ENCODE measurements at regions of chr20 and their contacts with region 1.

Region 1: DNA sequence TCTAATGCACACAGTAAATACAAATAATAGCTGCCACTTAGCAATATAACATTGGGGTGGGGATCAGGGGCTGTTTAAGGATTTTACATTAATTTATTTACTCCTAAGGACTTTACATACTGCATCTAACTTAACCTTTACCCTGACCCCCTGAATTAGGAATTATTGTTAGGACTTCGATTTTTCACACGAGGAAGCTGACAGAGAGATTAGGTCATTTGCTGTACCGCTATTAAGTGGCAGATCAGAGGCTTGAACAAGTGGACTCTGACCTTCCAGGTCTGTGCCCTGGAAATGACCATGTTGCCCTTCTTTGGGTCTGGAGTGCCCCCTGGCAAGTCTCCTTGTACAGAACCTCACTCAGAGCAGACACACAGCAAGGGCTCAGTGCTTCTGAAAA is 5.2 kb upstream of the ELMO2 start:
- DNase-seq: no peak
- H3K4me3 Mint-ChIP-seq: no peak overlapping the region
- H3K27ac Mint-ChIP-seq: no peak overlapping the region
- H3K4me1 Mint-ChIP-seq: peaks cover 37% of the 10 kb centered on the region
- H3K27me3 Mint-ChIP-seq: peaks cover 33% of the 10 kb centered on the region

Region 2: DNA sequence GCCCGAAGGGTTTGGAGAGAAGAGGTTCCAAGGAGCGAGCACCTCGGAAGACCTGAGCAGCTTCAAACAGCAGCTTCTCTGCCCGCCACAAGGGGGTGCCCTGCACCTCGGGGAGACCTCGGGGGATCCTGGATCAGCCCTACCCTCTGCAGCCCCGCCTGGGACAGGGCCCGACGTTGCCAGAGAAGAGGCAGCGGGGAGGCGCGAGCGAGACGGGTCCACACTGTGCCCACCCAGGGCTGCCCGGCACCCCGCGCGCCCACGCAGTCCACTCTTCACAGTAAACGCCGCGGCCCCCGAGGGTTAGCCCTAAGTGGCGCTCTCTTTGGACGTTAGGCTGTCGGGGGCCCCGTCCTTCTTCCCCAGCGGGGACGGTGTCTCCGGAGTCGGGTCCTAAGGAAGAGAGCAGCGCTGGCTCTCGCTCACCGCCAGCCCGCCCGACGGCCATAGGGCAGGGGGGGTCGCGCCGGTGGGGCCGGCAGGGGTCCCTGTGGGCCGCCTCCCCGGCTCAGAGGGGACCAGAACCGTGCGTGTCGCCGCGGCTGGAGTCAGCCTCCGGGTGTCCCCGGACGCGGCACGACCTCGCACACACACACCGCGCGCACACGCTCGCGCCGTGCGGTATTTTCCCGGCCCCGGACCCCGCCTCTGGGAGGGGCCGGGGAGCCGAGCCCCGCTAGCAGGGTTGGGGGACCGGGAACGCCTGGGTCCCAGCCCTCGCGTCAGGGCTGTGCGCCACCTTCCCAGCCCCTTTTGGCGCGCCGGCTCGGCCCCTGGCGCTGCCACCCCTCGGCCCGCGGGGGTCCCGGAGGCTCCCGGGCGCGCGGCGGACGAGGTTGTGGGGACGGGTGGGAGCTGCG is 104.3 kb before region 1 on chr20:
- CTCF ChIA-PET with region 1: interaction called, 30 read pairs
- DNase-seq: peak; percentile 83
- H3K4me3 Mint-ChIP-seq: peak overlapping the region; percentile 19
- H3K27ac Mint-ChIP-seq: no peak overlapping the region
- H3K4me1 Mint-ChIP-seq: peaks cover 6% of the 10 kb centered on the region
- H3K27me3 Mint-ChIP-seq: peaks cover 93% of the 10 kb centered on the region

Region 3: DNA sequence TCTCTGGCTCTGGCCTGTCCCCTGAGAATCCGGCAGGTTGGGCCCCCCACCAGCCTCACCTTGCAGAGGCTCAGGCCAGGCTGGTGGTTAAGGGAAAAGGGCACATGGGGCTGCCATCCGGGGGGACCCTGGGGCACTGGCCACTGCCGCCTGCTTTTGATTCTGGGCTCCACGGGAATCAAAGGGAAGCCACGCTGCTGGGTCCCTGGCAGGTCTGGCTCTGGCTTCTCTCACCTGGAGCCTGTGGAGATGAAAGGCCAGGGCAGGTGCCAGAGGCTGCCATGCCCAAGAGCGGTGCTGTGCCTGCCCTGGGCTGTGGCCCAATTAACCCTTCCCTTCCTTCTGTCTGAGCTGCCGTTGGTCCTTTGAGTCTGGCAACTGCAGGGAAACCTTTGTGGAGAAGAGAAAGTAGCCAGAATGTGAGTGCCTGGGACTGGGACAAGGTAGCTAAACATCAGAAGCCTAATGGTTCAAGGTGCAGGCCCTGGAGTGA is 93.9 kb before region 1 on chr20:
- CTCF ChIA-PET with region 1: no interaction called
- DNase-seq: no peak
- H3K4me3 Mint-ChIP-seq: no peak overlapping the region
- H3K27ac Mint-ChIP-seq: no peak overlapping the region
- H3K4me1 Mint-ChIP-seq: no peaks in the 10 kb centered on the region
- H3K27me3 Mint-ChIP-seq: peaks cover 90% of the 10 kb centered on the region

Region 4: DNA sequence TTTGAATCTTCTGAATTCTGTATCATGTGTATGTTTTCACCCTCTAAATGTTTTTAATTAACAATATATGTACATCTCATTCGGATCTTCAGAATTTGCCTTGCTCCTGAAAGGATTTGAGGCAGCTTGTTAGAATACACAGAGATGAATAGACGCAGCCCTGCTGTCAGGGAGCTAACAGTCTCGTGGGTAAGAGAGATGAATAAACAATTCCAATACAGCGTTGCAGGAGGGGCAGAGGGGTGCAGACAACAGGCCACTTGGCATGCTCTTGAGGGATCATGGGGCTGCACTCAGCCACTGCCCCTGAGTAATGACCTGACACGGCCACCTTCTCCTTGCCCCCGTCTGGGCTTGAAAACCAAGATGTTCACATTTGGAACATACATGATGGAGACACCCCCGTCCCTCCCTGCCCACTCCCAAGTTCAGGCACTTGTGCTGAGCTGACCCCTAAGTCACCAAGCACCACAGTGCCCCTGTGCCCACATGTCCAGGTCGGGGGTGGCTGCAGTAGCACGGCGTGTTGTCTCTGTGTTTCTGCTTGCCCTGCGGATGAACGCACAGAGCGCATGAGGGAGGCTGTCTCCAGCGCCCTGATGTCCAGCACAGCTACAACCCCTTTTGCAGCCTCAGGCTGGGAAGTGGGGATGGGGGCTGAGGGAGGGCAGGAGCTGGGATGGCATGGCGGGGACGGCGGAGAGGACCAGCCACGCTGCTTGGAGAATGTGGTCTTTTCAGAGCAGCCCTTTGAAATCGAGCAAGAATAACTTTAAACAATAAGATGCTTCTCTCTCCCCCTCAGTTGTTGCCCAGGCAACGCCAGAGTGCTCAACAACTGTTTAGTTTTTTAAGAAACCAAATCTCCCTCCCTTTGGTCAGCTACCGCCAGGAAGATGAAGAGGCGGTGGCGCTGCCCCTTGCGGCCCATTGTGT is 70.3 kb before region 1 on chr20:
- CTCF ChIA-PET with region 1: no interaction called
- DNase-seq: no peak
- H3K4me3 Mint-ChIP-seq: no peak overlapping the region
- H3K27ac Mint-ChIP-seq: no peak overlapping the region
- H3K4me1 Mint-ChIP-seq: peaks cover 4% of the 10 kb centered on the region
- H3K27me3 Mint-ChIP-seq: peaks cover 59% of the 10 kb centered on the region

Region 5: GRCh38 chr20:46400828-46401477 is 10.7 kb before region 1 on chr20:
- CTCF ChIA-PET with region 1: no interaction called
- DNase-seq: peak; percentile 41
- H3K4me3 Mint-ChIP-seq: peak overlapping the region; percentile 72
- H3K27ac Mint-ChIP-seq: peak overlapping the region; percentile 98
- H3K4me1 Mint-ChIP-seq: peaks cover 76% of the 10 kb centered on the region
- H3K27me3 Mint-ChIP-seq: no peaks in the 10 kb centered on the region

Region 6: GRCh38 chr20:46520976-46521579 is 109.4 kb after region 1 on chr20:
- CTCF ChIA-PET with region 1: no interaction called
- DNase-seq: peak; percentile 71
- H3K4me3 Mint-ChIP-seq: no peak overlapping the region
- H3K27ac Mint-ChIP-seq: no peak overlapping the region
- H3K4me1 Mint-ChIP-seq: no peaks in the 10 kb centered on the region
- H3K27me3 Mint-ChIP-seq: peaks cover 41% of the 10 kb centered on the region